ENCODE measurements at regions of chr1 and their contacts with region 1.

Region 1: DNA sequence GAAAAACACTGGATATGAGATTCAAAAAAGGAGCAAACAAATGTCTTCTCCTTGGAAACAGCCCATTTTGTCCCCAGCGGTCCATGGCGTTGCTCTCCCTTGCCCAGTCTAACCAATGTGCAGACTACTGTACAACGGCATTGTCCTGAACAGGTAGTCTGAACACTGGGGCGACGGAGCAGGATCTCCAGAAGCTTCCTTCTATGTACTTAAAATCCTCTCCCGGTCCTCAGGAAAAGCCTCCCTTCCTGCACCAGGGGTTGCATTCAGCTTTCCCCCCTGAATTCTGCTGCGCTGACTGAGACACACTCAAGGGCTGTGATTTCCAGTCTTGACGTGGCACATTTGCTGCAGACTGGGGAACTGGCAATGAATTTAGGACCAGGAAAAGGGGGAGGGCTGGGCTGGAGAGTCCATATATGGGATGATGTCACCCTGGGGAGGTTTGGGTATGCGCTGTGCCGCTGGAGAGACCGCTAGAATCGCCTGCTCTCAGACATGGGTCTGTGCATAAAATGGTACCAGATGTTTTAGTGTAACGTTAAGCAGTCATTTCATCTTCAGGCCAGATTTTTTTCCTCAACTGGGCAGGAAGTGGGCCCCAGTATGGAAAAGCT is 275.9 kb upstream of the C1orf105 start:
- DNase-seq: peak; percentile 89 to 90
- ATAC-seq: peak; percentile 96
- H3K4me3 ChIP-seq: peak overlapping the region; percentile 86 to 89
- H3K27ac ChIP-seq: peak overlapping the region; percentile 97
- H3K4me1 ChIP-seq: no peaks in the 10 kb centered on the region
- H3K27me3 ChIP-seq: no peaks in the 10 kb centered on the region

Region 2: DNA sequence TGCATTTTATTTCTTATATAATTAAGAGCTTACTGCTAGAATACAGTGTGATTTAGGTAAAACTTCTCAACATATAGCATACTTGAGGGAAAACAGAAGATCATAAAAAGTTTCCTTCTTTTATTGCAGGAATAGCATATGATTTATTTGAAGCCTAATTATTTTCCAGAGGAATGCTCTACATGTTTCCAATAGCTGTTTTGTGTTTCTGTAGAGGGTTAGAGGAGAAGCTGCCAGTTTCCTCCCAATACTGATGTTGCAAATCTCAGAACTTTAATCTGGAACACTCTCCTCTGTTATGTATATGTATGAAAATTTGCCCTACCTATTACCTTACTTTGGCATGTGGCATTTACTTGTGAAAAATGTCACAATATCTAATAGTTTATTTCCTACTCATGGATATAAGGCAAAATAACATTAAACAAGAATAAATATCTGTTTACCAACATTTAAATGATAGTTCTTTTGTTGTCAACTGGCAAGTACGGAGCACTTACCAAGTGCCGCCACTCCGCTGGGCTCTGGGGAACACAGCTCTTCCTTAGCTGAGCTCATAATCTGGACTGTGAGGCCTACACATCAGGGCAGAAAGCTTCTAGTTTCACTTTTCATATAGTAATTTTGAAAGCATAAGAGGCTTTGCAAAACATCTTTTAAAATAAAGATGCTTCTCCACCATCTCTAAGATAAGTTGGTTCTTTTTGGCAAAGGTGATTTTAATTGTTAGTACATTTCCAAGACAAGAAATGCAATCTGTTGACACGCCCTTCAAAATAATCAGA is 36.1 kb after region 1 on chr1:
- intact Hi-C with region 1: loop called (anchors 2 to 5 kb)
- DNase-seq: peak; percentile 71 to 76
- ATAC-seq: peak; percentile 82
- H3K4me3 ChIP-seq: peak overlapping the region; percentile 14 to 59
- H3K27ac ChIP-seq: peak overlapping the region; percentile 63 to 93
- H3K4me1 ChIP-seq: peaks cover 0 to 3% of the 10 kb centered on the region in 2 donors
- H3K27me3 ChIP-seq: no peaks in the 10 kb centered on the region

Region 3: GRCh38 chr1:172254521-172255222 is 110.1 kb after region 1 on chr1:
- intact Hi-C with region 1: loop called in 1 of 2 experiments (anchors 10 kb)
- DNase-seq: no peak
- ATAC-seq: no peak
- H3K4me3 ChIP-seq: peak overlapping the region in 1 of 2 donors; percentile 26
- H3K27ac ChIP-seq: peak overlapping the region in 1 of 2 donors; percentile 72
- H3K4me1 ChIP-seq: no peaks in the 10 kb centered on the region
- H3K27me3 ChIP-seq: no peaks in the 10 kb centered on the region

Region 4: DNA sequence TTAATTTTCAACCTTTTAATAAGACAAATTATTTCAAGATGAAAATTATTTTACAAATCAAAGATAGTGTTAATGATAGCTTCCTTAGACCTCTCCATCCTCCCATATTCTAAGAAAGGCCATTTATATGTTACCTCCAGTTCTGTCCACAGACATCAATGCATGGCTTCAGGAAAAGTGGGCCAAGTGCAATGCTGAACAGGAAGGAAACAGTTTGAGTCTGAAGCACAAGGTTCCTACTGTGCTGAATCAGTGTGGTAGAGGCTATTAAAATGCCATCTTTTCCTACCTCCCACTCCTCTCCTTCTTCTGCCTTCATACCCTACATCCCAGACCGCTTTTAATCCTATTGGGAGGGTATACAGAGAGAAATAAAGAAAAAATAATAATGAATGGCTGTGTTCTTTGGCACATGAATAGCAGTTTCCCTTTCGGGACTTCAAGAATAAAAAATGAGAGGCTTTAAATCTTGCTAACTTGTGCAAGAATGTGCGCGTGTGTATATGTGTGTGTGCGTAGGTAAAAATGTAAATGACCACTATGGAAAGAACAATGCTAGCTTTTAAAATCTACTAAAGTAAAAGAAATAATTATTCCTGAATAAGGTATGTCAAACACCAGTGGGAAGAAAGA is 213.3 kb after region 1 on chr1:
- intact Hi-C with region 1: loop called in 1 of 2 experiments (anchors 1 kb)
- DNase-seq: no peak
- ATAC-seq: no peak
- H3K4me3 ChIP-seq: peak overlapping the region; percentile 26 to 41
- H3K27ac ChIP-seq: peak overlapping the region; percentile 76 to 88
- H3K4me1 ChIP-seq: peaks cover 0 to 2% of the 10 kb centered on the region in 2 donors
- H3K27me3 ChIP-seq: no peaks in the 10 kb centered on the region

Region 5: DNA sequence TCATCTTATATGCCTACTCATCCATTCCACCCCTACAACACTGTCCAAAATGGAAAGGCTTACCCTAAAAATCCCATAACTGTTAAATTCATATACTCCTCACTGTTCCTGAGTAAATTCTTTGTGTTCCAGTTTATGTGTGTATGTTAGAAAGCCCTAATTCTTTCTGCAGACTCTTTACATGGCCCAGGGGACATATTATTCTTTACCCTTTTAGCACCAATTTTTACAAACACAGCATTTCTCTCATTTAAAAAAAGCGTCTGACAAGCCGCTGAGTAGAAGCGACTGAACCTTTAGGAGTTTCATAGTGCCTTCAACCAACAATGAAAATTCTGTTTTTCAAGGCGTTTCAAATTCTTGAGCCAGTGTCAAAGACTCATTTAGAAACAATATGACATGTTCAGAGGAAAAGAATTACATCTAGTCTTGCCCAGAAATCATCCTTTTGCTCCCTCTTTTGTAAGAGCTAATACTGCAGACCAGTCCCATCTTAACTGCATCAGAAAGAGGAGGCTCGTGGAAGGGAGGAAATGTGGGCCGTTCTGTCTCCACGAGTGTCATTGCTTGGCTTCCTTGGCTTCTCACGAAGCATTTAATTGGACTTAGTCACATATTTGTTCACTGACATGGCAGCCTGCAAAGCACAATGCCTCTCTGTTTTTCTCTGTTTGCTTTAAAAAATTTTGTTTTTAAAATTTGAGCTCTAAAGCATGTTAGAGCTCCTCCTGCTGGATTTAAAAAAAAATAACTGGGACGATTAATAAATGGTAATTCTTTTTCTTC is 254.6 kb after region 1 on chr1:
- intact Hi-C with region 1: loop called (anchors 2 kb)
- DNase-seq: peak in 1 of 2 donors; percentile 70
- ATAC-seq: peak; percentile 91
- H3K4me3 ChIP-seq: peak overlapping the region; percentile 1 to 26
- H3K27ac ChIP-seq: peak overlapping the region; percentile 68
- H3K4me1 ChIP-seq: peaks cover 4 to 9% of the 10 kb centered on the region in 2 donors
- H3K27me3 ChIP-seq: no peaks in the 10 kb centered on the region